B cell (primary cell): ENCODE measurements at regions of chr3 and their contacts with region 1.

Region 1: DNA sequence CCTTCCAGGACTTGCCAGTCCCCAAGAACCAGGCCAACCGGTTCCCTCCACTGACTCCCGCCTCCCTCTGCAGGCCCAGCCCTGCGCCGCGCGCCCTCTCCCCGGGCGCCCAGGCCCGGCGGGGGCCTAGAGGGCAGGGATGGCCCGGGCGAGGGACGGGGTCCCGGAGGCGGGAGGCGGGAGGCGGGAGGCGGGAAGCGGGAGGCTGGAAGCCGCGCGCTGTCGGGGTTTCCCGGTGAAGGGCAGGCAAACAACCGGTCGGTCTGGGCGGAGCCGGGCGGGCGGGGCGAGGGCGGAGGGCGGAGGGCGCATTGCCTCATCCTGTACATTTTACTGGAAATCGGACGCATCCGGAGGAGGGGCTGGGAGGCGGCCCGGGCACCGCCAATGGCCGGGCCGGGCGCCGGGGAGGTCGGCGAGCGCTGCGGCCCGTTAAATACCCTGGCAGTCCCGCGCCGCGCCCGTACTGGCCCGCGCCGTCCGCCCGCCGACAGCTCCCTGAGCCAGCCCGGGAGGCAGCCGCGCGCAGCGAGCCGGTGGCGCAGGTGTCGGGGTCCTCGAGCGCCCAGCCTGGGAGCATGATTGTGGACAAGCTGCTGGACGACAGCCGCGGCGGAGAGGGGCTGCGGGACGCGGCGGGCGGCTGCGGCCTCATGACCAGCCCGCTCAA is at the start of gene NFKBIZ:
- DNase-seq: peak; percentile 92
- ATAC-seq: peak; percentile 82
- H3K4me3 ChIP-seq: peak within 1 kb of the TSS; percentile 87 to 100 (median 94)
- H3K4me3 Mint-ChIP-seq: peak within 1 kb of the TSS; percentile 99
- H3K27ac ChIP-seq: peak within 1 kb of the TSS; percentile 84 to 92
- H3K27ac Mint-ChIP-seq: peak within 1 kb of the TSS; percentile 96
- H3K4me1 ChIP-seq: peaks cover 18 to 36% of the 10 kb centered on the region in 2 donors
- H3K4me1 Mint-ChIP-seq: peaks cover 50% of the 10 kb centered on the region
- H3K27me3 ChIP-seq: no peaks in the 10 kb centered on the region
- H3K27me3 Mint-ChIP-seq: no peaks in the 10 kb centered on the region
- CTCF ChIP-seq: no peak
- total RNA-seq, gene NFKBIZ: 141 and 157 TPM in 2 replicates

Region 2: DNA sequence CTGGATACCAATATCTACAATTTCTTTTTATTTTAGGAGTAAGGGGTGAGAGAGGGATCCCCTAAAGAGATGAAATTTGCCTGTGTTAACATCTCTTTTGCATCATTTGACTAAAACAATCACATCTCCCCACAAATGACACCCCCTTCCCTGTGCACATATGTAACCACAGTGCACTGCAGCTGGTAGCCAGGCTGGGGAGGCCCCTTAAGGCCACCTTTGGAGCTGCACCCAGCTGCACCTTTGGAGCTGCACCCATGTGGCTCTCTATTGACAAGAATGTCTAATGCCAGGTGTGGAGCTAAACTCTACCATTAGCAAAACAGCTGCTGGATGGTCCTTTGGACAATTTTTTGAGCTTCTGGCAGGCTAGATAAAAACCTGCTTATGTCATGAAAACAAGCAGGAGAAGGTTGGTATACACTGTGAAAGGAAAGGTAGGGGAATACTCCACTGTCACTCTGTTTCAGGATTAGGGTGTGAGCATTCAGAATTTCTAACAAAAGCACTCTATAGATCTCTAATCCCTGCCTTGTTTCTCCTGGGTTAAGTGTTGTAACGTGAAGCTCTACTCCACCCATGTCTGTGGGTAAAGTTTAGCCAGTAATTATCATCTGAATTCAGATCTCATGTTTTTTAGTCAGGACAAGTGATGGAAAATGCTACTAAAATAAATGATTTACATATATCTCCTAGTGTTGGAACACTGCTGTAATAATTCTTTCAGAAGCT is 1087.8 kb before region 1 on chr3:
- CTCF ChIA-PET with region 1: no interaction called
- POLR2A ChIA-PET with region 1: no interaction called
- intact Hi-C with region 1: no loop called
- DNase-seq: no peak
- ATAC-seq: no peak
- H3K4me3 ChIP-seq: no peak overlapping the region
- H3K4me3 Mint-ChIP-seq: no peak overlapping the region
- H3K27ac ChIP-seq: no peak overlapping the region
- H3K27ac Mint-ChIP-seq: no peak overlapping the region
- H3K4me1 ChIP-seq: no peaks in the 10 kb centered on the region
- H3K4me1 Mint-ChIP-seq: peaks cover 3% of the 10 kb centered on the region
- H3K27me3 ChIP-seq: no peaks in the 10 kb centered on the region
- H3K27me3 Mint-ChIP-seq: no peaks in the 10 kb centered on the region
- CTCF ChIP-seq: no peak

Region 3: GRCh38 chr3:101724329-101725193 is 124.6 kb before region 1 on chr3 and contains the start of gene CEP97:
- CTCF ChIA-PET with region 1: no interaction called
- POLR2A ChIA-PET with region 1: no interaction called
- intact Hi-C with region 1: no loop called
- DNase-seq: peak; percentile 91
- ATAC-seq: peak; percentile 93
- H3K4me3 ChIP-seq: peak within 1 kb of the TSS; percentile 77 to 99 (median 84)
- H3K4me3 Mint-ChIP-seq: peak within 1 kb of the TSS; percentile 100
- H3K27ac ChIP-seq: peak within 1 kb of the TSS; percentile 70 to 74
- H3K27ac Mint-ChIP-seq: peak within 1 kb of the TSS; percentile 99
- H3K4me1 ChIP-seq: peaks cover 30 to 34% of the 10 kb centered on the region in 2 donors
- H3K4me1 Mint-ChIP-seq: peaks cover 37% of the 10 kb centered on the region
- H3K27me3 ChIP-seq: no peaks in the 10 kb centered on the region
- H3K27me3 Mint-ChIP-seq: no peaks in the 10 kb centered on the region
- CTCF ChIP-seq: no peak
- total RNA-seq, gene CEP97: 15.0 and 15.4 TPM in 2 replicates

Region 4: GRCh38 chr3:101779047-101779821 is 70.0 kb before region 1 on chr3 and contains the start of gene NXPE3:
- CTCF ChIA-PET with region 1: interaction called, 3 read pairs
- POLR2A ChIA-PET with region 1: no interaction called
- intact Hi-C with region 1: loop called (anchors 2 kb)
- DNase-seq: peak; percentile 93
- ATAC-seq: peak; percentile 92
- H3K4me3 ChIP-seq: peak within 1 kb of the TSS; percentile 65 to 89 (median 88)
- H3K4me3 Mint-ChIP-seq: peak within 1 kb of the TSS; percentile 94
- H3K27ac ChIP-seq: peak within 1 kb of the TSS; percentile 79 to 86
- H3K27ac Mint-ChIP-seq: peak within 1 kb of the TSS; percentile 98
- H3K4me1 ChIP-seq: peaks cover 21 to 29% of the 10 kb centered on the region in 2 donors
- H3K4me1 Mint-ChIP-seq: peaks cover 37% of the 10 kb centered on the region
- H3K27me3 ChIP-seq: no peaks in the 10 kb centered on the region
- H3K27me3 Mint-ChIP-seq: no peaks in the 10 kb centered on the region
- CTCF ChIP-seq: no peak
- total RNA-seq, gene NXPE3: 18.9 and 19.7 TPM in 2 replicates

Region 5: GRCh38 chr3:101791778-101792177 is 57.4 kb before region 1 on chr3:
- CTCF ChIA-PET with region 1: no interaction called
- POLR2A ChIA-PET with region 1: no interaction called
- intact Hi-C with region 1: no loop called
- DNase-seq: peak; percentile 66
- ATAC-seq: peak; percentile 87
- H3K4me3 ChIP-seq: peak overlapping the region in 1 of 5 experiments; percentile 9
- H3K4me3 Mint-ChIP-seq: peak overlapping the region; percentile 12
- H3K27ac ChIP-seq: peak overlapping the region in 1 of 2 donors; percentile 11
- H3K27ac Mint-ChIP-seq: peak overlapping the region; percentile 2
- H3K4me1 ChIP-seq: peaks cover 18 to 25% of the 10 kb centered on the region in 2 donors
- H3K4me1 Mint-ChIP-seq: peaks cover 35% of the 10 kb centered on the region
- H3K27me3 ChIP-seq: no peaks in the 10 kb centered on the region
- H3K27me3 Mint-ChIP-seq: no peaks in the 10 kb centered on the region
- CTCF ChIP-seq: no peak

Region 6: GRCh38 chr3:101819758-101820157 is 29.4 kb before region 1 on chr3:
- CTCF ChIA-PET with region 1: interaction called, 25 read pairs
- POLR2A ChIA-PET with region 1: interaction called, 14 read pairs
- intact Hi-C with region 1: loop called (anchors 5 kb)
- DNase-seq: peak; percentile 43
- ATAC-seq: no peak
- H3K4me3 ChIP-seq: no peak overlapping the region
- H3K4me3 Mint-ChIP-seq: no peak overlapping the region
- H3K27ac ChIP-seq: no peak overlapping the region
- H3K27ac Mint-ChIP-seq: peak overlapping the region; percentile 20
- H3K4me1 ChIP-seq: peaks cover 33 to 37% of the 10 kb centered on the region in 2 donors
- H3K4me1 Mint-ChIP-seq: peaks cover 42% of the 10 kb centered on the region
- H3K27me3 ChIP-seq: no peaks in the 10 kb centered on the region
- H3K27me3 Mint-ChIP-seq: no peaks in the 10 kb centered on the region
- CTCF ChIP-seq: no peak

Region 7: GRCh38 chr3:101836652-101837598 is 12.3 kb before region 1 on chr3:
- CTCF ChIA-PET with region 1: interaction called, 8 read pairs
- POLR2A ChIA-PET with region 1: interaction called, 5 read pairs
- intact Hi-C with region 1: loop called (anchors 1 kb)
- DNase-seq: peak; percentile 77
- ATAC-seq: peak; percentile 68
- H3K4me3 ChIP-seq: peak overlapping the region in 2 of 5 experiments; percentile 2 to 14
- H3K4me3 Mint-ChIP-seq: peak overlapping the region; percentile 73
- H3K27ac ChIP-seq: peak overlapping the region; percentile 19 to 49
- H3K27ac Mint-ChIP-seq: peak overlapping the region; percentile 28
- H3K4me1 ChIP-seq: peaks cover 55 to 59% of the 10 kb centered on the region in 2 donors
- H3K4me1 Mint-ChIP-seq: peaks cover 84% of the 10 kb centered on the region
- H3K27me3 ChIP-seq: no peaks in the 10 kb centered on the region
- H3K27me3 Mint-ChIP-seq: no peaks in the 10 kb centered on the region
- CTCF ChIP-seq: no peak

Region 8: GRCh38 chr3:101898752-101899169 is 49.6 kb after region 1 on chr3:
- CTCF ChIA-PET with region 1: interaction called, 3 read pairs
- POLR2A ChIA-PET with region 1: no interaction called
- intact Hi-C with region 1: loop called (anchors 1 kb)
- DNase-seq: peak; percentile 86
- ATAC-seq: peak; percentile 94
- H3K4me3 ChIP-seq: peak overlapping the region in 1 of 5 experiments; percentile 1
- H3K4me3 Mint-ChIP-seq: peak overlapping the region; percentile 46
- H3K27ac ChIP-seq: peak overlapping the region; percentile 86 to 90
- H3K27ac Mint-ChIP-seq: peak overlapping the region; percentile 62
- H3K4me1 ChIP-seq: peaks cover 29 to 32% of the 10 kb centered on the region in 2 donors
- H3K4me1 Mint-ChIP-seq: peaks cover 36% of the 10 kb centered on the region
- H3K27me3 ChIP-seq: no peaks in the 10 kb centered on the region
- H3K27me3 Mint-ChIP-seq: no peaks in the 10 kb centered on the region
- CTCF ChIP-seq: no peak

Region 9: DNA sequence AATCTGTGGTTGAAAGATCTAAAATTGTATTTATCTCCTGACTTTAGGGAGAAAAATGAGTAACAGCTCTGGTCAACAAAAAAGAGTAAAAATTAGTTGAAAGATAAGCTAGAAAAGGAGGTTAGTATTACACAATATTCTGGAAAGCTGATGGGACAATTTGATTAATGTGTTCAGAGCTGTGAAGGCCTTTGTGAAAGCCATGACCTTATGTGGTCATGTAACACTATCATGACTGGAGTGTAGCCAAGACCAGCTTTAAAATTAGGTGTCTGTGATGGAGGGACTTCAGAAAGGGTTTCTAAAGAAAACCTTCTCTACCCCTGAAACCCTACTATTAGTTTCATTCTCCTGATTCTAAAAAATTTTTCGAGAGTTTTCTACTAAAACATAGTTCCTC is 127.3 kb after region 1 on chr3:
- CTCF ChIA-PET with region 1: no interaction called
- POLR2A ChIA-PET with region 1: no interaction called
- intact Hi-C with region 1: no loop called
- DNase-seq: no peak
- ATAC-seq: no peak
- H3K4me3 ChIP-seq: no peak overlapping the region
- H3K4me3 Mint-ChIP-seq: no peak overlapping the region
- H3K27ac ChIP-seq: peak overlapping the region in 1 of 2 donors; percentile 32
- H3K27ac Mint-ChIP-seq: peak overlapping the region; percentile 28
- H3K4me1 ChIP-seq: peaks cover 2 to 21% of the 10 kb centered on the region in 2 donors
- H3K4me1 Mint-ChIP-seq: peaks cover 25% of the 10 kb centered on the region
- H3K27me3 ChIP-seq: no peaks in the 10 kb centered on the region
- H3K27me3 Mint-ChIP-seq: no peaks in the 10 kb centered on the region
- CTCF ChIP-seq: no peak

Region 10: GRCh38 chr3:102038477-102039142 is 189.4 kb after region 1 on chr3:
- CTCF ChIA-PET with region 1: no interaction called
- POLR2A ChIA-PET with region 1: no interaction called
- intact Hi-C with region 1: loop called (anchors 5 kb)
- DNase-seq: peak; percentile 66
- ATAC-seq: peak; percentile 66
- H3K4me3 ChIP-seq: peak overlapping the region in 1 of 5 experiments; percentile 35
- H3K4me3 Mint-ChIP-seq: peak overlapping the region; percentile 49
- H3K27ac ChIP-seq: peak overlapping the region; percentile 51 to 79
- H3K27ac Mint-ChIP-seq: peak overlapping the region; percentile 87
- H3K4me1 ChIP-seq: peaks cover 28 to 34% of the 10 kb centered on the region in 2 donors
- H3K4me1 Mint-ChIP-seq: peaks cover 41% of the 10 kb centered on the region
- H3K27me3 ChIP-seq: no peaks in the 10 kb centered on the region
- H3K27me3 Mint-ChIP-seq: no peaks in the 10 kb centered on the region
- CTCF ChIP-seq: no peak